A549 (cell line): ENCODE measurements at regions of chr14 and their contacts with region 1.

Region 1: DNA sequence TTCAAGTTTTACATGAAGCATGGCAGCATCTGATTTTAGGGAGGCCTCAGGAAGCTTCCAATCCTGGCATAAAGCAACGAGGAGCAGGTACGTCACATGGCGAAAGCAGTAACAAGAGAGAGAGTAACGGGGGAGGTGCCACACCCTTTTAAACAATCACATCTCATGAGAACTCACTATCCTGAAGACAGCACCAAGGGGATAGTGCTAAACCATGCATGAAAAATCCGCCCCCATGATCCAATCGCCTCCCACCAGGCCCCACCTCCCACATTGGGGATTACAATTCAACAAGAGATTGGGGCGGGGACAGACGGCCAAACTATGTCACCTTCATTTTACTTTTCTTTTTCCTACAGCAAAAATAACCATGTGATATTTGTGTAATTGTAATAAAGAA is 7.2 kb upstream of the MAP3K9 start:
- DNase-seq: peak in 1 of 2 experiments; percentile 16
- ATAC-seq: no peak
- H3K4me3 ChIP-seq: no peak overlapping the region
- H3K27ac ChIP-seq: no peak overlapping the region
- H3K4me1 ChIP-seq: peaks cover 24% of the 10 kb centered on the region
- CTCF ChIP-seq: no peak
- EP300 ChIP-seq: no peak
- POLR2A ChIP-seq: no peak
- RAD21 ChIP-seq: no peak

Region 2: DNA sequence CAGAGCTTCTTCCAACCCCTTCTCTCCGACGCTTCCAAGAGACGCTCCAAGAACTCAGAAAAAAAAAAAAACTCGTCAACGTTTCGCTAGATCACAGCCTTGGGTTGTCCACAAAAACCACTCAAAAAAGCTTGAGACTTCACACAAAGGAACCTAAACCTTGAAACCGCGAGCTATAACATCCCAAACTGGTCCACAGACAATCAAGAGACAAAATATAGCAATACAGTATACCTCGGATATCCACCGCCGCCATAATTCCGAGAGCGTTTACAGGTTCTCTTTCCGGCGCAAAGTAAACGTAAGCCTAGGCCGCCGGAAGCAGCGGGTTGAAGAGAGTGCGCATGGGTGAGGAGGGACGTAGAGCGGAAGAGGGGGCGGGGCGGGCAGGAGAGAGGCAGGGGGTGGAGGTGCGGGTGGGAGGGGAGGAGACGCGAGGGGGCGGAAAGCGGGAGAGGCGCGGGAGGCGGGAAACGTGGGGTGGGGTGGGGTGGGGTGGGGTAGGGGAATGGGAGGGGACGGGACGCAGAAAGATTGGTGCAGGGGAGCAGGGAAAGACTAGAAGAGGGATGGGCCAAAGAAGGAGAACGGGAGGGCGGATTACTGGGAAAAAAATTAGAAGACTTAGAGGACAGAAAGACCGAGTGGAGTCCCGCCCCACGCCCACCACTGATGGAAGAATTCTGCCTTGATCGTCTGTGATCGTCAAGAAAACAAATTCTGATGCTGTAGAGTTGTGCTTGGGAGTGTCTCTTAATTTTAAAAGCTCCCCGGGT is 216.0 kb before region 1 on chr14 and contains the start of gene MED6:
- CTCF ChIA-PET with region 1: interaction called, 18 read pairs
- POLR2A ChIA-PET with region 1: interaction called, 3 read pairs
- DNase-seq: peak; percentile 78 to 94
- ATAC-seq: peak; percentile 97 to 98
- H3K4me3 ChIP-seq: peak within 1 kb of the TSS; percentile 99
- H3K27ac ChIP-seq: peak within 1 kb of the TSS; percentile 93 to 96
- H3K4me1 ChIP-seq: peaks cover 14% of the 10 kb centered on the region
- CTCF ChIP-seq: no peak
- EP300 ChIP-seq: no peak
- POLR2A ChIP-seq: peak; percentile 5; the same call in 1 of the 2 replicates
- RAD21 ChIP-seq: no peak; a peak in 1 of 5 replicates
- polyA plus RNA-seq, gene MED6: 74.6 and 85.5 TPM in 2 replicates

Region 3: GRCh38 chr14:70698288-70698687 is 118.2 kb before region 1 on chr14:
- CTCF ChIA-PET with region 1: interaction called, 16 read pairs
- POLR2A ChIA-PET with region 1: no interaction called
- DNase-seq: peak; percentile 21 to 56
- ATAC-seq: peak; percentile 53 to 76; a peak in 4 of 6 replicates
- H3K4me3 ChIP-seq: no peak overlapping the region
- H3K27ac ChIP-seq: peak overlapping the region; percentile 65 to 81
- H3K4me1 ChIP-seq: peaks cover 16% of the 10 kb centered on the region
- CTCF ChIP-seq: no peak
- EP300 ChIP-seq: no peak
- POLR2A ChIP-seq: no peak
- RAD21 ChIP-seq: no peak

Region 4: GRCh38 chr14:70754989-70755388 is 61.5 kb before region 1 on chr14:
- CTCF ChIA-PET with region 1: interaction called, 13 read pairs
- POLR2A ChIA-PET with region 1: no interaction called
- DNase-seq: peak in 1 of 2 experiments; percentile 82
- ATAC-seq: peak; percentile 77 to 83
- H3K4me3 ChIP-seq: no peak overlapping the region
- H3K27ac ChIP-seq: peak overlapping the region; percentile 86 to 87
- H3K4me1 ChIP-seq: peaks cover 46% of the 10 kb centered on the region
- CTCF ChIP-seq: no peak
- EP300 ChIP-seq: peak; percentile 51 to 64; a peak in 2 of 5 replicates
- POLR2A ChIP-seq: no peak
- RAD21 ChIP-seq: peak in 1 of 2 experiments; percentile 32; a peak in 1 of 5 replicates

Region 5: GRCh38 chr14:70801836-70802235 is 14.7 kb before region 1 on chr14:
- CTCF ChIA-PET with region 1: interaction called, 20 read pairs
- POLR2A ChIA-PET with region 1: no interaction called
- DNase-seq: no peak
- ATAC-seq: no peak
- H3K4me3 ChIP-seq: no peak overlapping the region
- H3K27ac ChIP-seq: no peak overlapping the region
- H3K4me1 ChIP-seq: no peaks in the 10 kb centered on the region
- CTCF ChIP-seq: no peak
- EP300 ChIP-seq: no peak
- POLR2A ChIP-seq: no peak
- RAD21 ChIP-seq: no peak

Region 6: GRCh38 chr14:70842851-70843462 is 26.4 kb after region 1 on chr14:
- CTCF ChIA-PET with region 1: interaction called, 11 read pairs
- POLR2A ChIA-PET with region 1: no interaction called
- DNase-seq: no peak
- ATAC-seq: no peak
- H3K4me3 ChIP-seq: no peak overlapping the region
- H3K27ac ChIP-seq: no peak overlapping the region
- H3K4me1 ChIP-seq: no peaks in the 10 kb centered on the region
- CTCF ChIP-seq: no peak
- EP300 ChIP-seq: no peak
- POLR2A ChIP-seq: no peak
- RAD21 ChIP-seq: no peak

Region 7: GRCh38 chr14:70907176-70907995 is 90.9 kb after region 1 on chr14 and contains the start of gene PCNX1:
- CTCF ChIA-PET with region 1: interaction called, 27 read pairs
- POLR2A ChIA-PET with region 1: interaction called, 5 read pairs
- DNase-seq: peak; percentile 85 to 87
- ATAC-seq: peak; percentile 85
- H3K4me3 ChIP-seq: peak within 1 kb of the TSS; percentile 89
- H3K27ac ChIP-seq: peak within 1 kb of the TSS; percentile 95
- H3K4me1 ChIP-seq: peaks cover 19% of the 10 kb centered on the region
- CTCF ChIP-seq: peak; percentile 89
- EP300 ChIP-seq: no peak
- POLR2A ChIP-seq: peak; percentile 55
- RAD21 ChIP-seq: peak; percentile 29 to 71; a peak in 4 of 5 replicates
- polyA plus RNA-seq, gene PCNX1: 45.0 and 50.0 TPM in 2 replicates